Transverse colon (tissue), 4 donors: ENCODE measurements at regions of chr18 and their contacts with region 1.

Region 1: GRCh38 chr18:2932247-2933181 is 80.4 kb downstream of the LPIN2 start:
- DNase-seq: no peak
- H3K4me3 ChIP-seq: no peak overlapping the region
- H3K27ac ChIP-seq: no peak overlapping the region
- H3K4me1 ChIP-seq: peaks cover 0 to 8% (median 0%) of the 10 kb centered on the region in 4 donors
- H3K27me3 ChIP-seq: no peaks in the 10 kb centered on the region
- CTCF ChIP-seq: peak; percentile 69 to 89 (median 78)
- EP300 ChIP-seq: no peak
- POLR2A ChIP-seq: no peak

Region 2: DNA sequence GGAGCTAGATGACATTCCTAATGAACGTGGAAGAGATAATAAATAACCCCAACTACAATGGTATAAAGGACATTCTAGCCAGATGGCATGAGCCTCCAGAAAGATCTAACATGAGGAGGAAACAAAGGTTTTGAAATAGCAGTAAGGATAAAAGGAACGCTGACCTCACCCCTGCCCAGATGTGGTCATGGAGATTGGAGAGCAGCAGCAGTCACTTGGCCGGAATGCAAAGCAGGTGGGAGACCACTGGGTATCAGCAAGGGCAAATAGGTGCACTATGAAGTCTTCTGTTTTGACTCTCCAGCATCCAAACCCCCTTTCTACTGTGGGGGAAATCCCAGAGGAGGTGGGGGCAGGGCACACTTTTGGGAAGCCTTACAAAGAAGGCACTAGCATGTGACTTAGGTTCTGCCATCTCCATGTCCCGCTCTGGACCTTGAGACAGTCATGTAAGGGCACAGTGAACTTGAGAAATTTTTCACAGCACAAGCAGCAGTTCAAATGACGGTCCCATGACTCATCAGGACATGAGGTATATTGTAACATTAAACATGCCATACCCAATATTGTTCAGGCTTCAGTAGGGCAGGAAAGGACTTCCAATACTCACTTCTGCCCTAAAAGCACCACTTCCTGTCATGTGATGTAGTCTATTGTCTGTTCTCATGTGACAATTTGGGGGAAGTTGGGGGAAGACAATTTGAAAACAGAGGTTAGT is 416.4 kb before region 1 on chr18:
- in situ Hi-C with region 1: no loop called
- intact Hi-C with region 1: no loop called
- DNase-seq: no peak
- H3K4me3 ChIP-seq: no peak overlapping the region
- H3K27ac ChIP-seq: no peak overlapping the region
- H3K4me1 ChIP-seq: no peaks in the 10 kb centered on the region
- H3K27me3 ChIP-seq: no peaks in the 10 kb centered on the region
- CTCF ChIP-seq: no peak
- EP300 ChIP-seq: no peak
- POLR2A ChIP-seq: no peak

Region 3: DNA sequence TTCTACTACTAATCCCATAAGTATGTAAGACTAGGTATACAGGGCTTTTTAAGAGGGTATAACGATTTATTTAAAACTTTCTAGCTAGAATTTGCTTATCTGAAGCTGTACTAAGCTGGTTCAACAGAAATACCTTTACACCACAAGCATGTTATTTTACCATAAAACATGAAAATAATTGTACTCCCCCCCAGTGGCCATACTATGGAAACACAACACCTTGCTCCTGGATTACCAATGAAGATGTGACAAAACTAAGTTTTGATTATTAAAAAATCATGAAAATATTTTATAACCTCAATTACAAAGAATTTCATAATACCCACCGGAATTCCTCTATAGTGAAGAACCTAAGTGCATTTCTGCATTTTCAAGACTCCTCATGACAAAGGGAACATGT is 53.1 kb after region 1 on chr18:
- in situ Hi-C with region 1: loop called in 2 of 4 experiments (anchors 10 kb)
- intact Hi-C with region 1: no loop called
- DNase-seq: no peak
- H3K4me3 ChIP-seq: no peak overlapping the region
- H3K27ac ChIP-seq: peak overlapping the region; percentile 68 to 87 (median 78)
- H3K4me1 ChIP-seq: peaks cover 31 to 65% (median 51%) of the 10 kb centered on the region in 4 donors
- H3K27me3 ChIP-seq: no peaks in the 10 kb centered on the region
- CTCF ChIP-seq: peak; percentile 40 to 64 (median 47)
- EP300 ChIP-seq: no peak
- POLR2A ChIP-seq: no peak

Region 4: GRCh38 chr18:3062798-3063680 is 130.5 kb after region 1 on chr18:
- in situ Hi-C with region 1: loop called in 2 of 4 experiments (anchors 25 kb)
- intact Hi-C with region 1: loop called (anchors 5 kb)
- DNase-seq: peak; percentile 74
- H3K4me3 ChIP-seq: no peak overlapping the region
- H3K27ac ChIP-seq: peak overlapping the region in 2 of 4 donors; percentile 4 to 37
- H3K4me1 ChIP-seq: peaks cover 0 to 30% (median 6%) of the 10 kb centered on the region in 4 donors
- H3K27me3 ChIP-seq: no peaks in the 10 kb centered on the region
- CTCF ChIP-seq: peak; percentile 68 to 76 (median 73)
- EP300 ChIP-seq: no peak
- POLR2A ChIP-seq: no peak

Region 5: DNA sequence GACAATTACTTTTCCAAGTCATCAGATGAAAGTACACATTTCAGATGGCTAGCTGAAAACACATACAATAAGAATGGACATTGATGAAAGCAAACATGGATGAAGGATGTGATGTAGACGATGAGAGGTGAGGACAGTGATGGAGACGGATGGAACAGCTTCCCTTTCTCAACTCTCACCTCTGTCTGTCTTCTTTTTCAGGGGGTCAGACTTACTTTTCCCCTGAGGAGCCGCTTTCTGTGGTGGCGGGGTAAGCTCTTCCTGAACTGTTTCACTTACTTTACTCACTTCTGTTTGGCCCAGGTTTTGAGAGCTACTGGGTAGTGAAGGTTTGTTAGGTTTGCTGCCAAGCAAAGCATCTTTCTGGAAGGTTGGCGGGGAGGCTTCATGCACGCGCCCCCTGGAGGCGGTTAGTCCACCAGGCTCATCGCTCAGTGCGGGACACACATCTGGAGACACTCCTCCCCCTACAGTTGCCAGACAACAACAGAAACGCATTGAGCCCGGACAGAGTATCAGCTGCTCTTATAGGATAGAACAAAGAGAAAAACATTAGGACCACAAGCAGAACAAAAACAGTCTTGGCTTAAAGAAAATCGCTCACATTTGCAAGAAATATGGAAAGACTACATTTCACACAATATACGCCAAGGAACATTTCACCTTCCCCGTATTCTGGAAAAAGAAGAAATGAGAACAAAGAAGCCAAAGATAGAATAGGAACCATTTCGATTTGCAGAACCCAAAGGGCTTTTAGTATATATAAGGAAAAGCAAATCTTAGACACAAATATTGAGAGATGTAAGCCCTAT is 196.7 kb after region 1 on chr18:
- in situ Hi-C with region 1: loop called in 3 of 4 experiments (anchors 10 kb)
- intact Hi-C with region 1: loop called (anchors 1 kb)
- DNase-seq: peak; percentile 88
- H3K4me3 ChIP-seq: peak overlapping the region in 1 of 4 donors; percentile 16
- H3K27ac ChIP-seq: no peak overlapping the region
- H3K4me1 ChIP-seq: peaks cover 0 to 8% (median 3%) of the 10 kb centered on the region in 4 donors
- H3K27me3 ChIP-seq: no peaks in the 10 kb centered on the region
- CTCF ChIP-seq: peak; percentile 76 to 85 (median 83)
- EP300 ChIP-seq: no peak
- POLR2A ChIP-seq: no peak

Region 6: DNA sequence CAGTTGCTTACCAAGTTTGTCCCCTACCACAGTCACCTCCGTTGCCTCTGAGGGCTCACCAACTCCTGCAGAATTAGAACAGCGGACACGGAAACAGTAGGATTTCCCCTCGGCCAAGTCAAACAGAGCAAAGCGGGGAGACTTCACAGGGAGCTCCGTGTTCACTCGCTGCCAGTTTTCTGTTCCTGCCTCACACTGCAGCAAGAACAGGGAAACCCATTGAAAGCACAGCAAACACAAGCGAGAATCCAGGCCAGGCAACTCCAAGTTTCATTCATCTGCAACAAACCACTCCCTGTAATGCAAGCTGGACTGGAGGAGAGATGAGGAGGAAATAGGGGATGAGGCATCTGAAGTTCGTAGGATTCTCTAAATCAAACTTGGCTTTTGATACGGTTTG is 203.0 kb after region 1 on chr18:
- in situ Hi-C with region 1: loop called in 3 of 4 experiments (anchors 10 kb)
- intact Hi-C with region 1: loop called (anchors 1 kb)
- DNase-seq: no peak
- H3K4me3 ChIP-seq: no peak overlapping the region
- H3K27ac ChIP-seq: no peak overlapping the region
- H3K4me1 ChIP-seq: peaks cover 0 to 3% (median 0%) of the 10 kb centered on the region in 4 donors
- H3K27me3 ChIP-seq: no peaks in the 10 kb centered on the region
- CTCF ChIP-seq: no peak
- EP300 ChIP-seq: no peak
- POLR2A ChIP-seq: no peak

Region 7: DNA sequence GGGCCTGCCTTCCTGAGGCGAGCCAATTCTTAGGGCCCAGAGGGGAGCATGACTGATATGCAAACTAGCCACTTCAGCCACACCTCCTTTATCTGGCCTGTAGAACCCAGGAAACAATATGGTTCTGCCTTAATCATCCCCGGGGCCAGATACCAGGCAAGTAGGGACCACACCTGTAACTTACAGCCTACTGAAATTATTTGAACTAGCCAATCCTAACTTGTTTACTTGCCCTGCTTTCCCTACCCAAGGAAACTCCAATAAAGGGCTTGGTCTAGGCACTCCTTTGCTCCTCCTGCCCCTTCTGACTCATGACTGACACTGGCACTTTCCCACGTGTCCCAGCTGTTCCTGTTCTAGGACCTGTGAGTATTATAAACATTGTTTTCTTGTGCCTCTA is 229.7 kb after region 1 on chr18:
- in situ Hi-C with region 1: no loop called
- intact Hi-C with region 1: no loop called
- DNase-seq: peak; percentile 74
- H3K4me3 ChIP-seq: no peak overlapping the region
- H3K27ac ChIP-seq: peak overlapping the region in 3 of 4 donors; percentile 40 to 52 (median 47)
- H3K4me1 ChIP-seq: peaks cover 0 to 9% (median 0%) of the 10 kb centered on the region in 4 donors
- H3K27me3 ChIP-seq: no peaks in the 10 kb centered on the region
- CTCF ChIP-seq: no peak
- EP300 ChIP-seq: no peak
- POLR2A ChIP-seq: no peak

Region 8: GRCh38 chr18:3186678-3187658 is 254.5 kb after region 1 on chr18:
- in situ Hi-C with region 1: no loop called
- intact Hi-C with region 1: no loop called
- DNase-seq: no peak
- H3K4me3 ChIP-seq: no peak overlapping the region
- H3K27ac ChIP-seq: no peak overlapping the region
- H3K4me1 ChIP-seq: no peaks in the 10 kb centered on the region
- H3K27me3 ChIP-seq: no peaks in the 10 kb centered on the region
- CTCF ChIP-seq: peak in 4 of 5 experiments; percentile 32 to 52 (median 42)
- EP300 ChIP-seq: no peak
- POLR2A ChIP-seq: no peak

Region 9: DNA sequence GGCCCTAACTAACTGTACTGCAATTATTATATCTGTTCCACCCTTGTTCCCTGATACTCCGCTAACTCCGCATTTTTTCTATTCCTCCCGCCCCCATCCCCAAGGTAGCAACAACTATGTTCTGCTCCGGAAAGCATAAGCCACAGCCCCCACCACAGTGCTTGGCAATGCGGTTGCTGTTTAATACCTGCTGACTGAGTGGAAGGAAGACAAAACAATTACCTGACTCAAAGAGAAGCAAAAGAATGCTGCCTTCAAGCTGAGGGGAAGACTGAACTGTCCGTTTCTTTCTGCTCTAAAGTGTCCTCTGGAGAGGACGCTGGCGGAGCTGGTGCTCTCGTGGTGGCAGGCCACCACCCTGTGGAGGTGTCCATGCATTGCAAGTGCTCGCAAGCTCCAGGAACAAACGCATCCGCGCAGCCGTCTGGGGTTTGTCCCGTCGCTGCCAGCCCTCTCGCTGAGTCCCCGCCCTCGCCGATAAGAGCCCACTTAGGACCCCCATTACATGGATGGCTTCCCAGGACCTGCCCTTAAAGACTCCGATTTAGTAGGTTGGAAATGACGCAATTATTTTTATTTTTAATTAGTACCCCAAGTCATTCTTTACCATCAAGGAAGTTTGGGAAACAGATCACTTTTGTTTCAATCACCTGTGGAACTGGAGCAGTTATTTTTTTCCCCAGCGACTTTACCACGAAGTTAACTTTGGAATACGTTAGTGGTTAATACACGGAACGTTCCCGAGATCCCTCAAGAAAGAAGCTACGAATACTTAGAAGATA is 313.5 kb after region 1 on chr18:
- in situ Hi-C with region 1: loop called (anchors 10 to 25 kb)
- intact Hi-C with region 1: loop called (anchors 5 kb)
- DNase-seq: peak; percentile 91
- H3K4me3 ChIP-seq: peak overlapping the region in 3 of 4 donors; percentile 81 to 100 (median 97)
- H3K27ac ChIP-seq: peak overlapping the region; percentile 98 to 100 (median 99)
- H3K4me1 ChIP-seq: peaks cover 9 to 43% (median 23%) of the 10 kb centered on the region in 4 donors
- H3K27me3 ChIP-seq: no peaks in the 10 kb centered on the region
- CTCF ChIP-seq: peak; percentile 92 to 97 (median 95)
- EP300 ChIP-seq: no peak
- POLR2A ChIP-seq: no peak